Activated T-helper 1 cell treated with anti-CD3 and anti-CD28 coated beads, Interleukin-12 subunit alpha, Interleukin-12 subunit beta, Interleukin-2, Interleukin-4 antibody, amounts not matched to agents 30 ng/mL and 10 ng/mL and 1 ng/mL, durations not matched to agents 14 hours and 24 hours and 36 hours (primary cell): ENCODE measurements at regions of chr10 and their contacts with region 1.

Region 1: GRCh38 chr10:94362360-94363250 is at the start of gene NOC3L:
- DNase-seq: peak; percentile 92
- H3K4me3 Mint-ChIP-seq: peak within 1 kb of the TSS; percentile 88
- H3K27ac Mint-ChIP-seq: peak within 1 kb of the TSS; percentile 93
- H3K4me1 Mint-ChIP-seq: peaks cover 41% of the 10 kb centered on the region
- H3K27me3 Mint-ChIP-seq: peaks cover 10% of the 10 kb centered on the region
- total RNA-seq, gene NOC3L: 47.7 and 47.8 TPM in 2 replicates

Region 2: DNA sequence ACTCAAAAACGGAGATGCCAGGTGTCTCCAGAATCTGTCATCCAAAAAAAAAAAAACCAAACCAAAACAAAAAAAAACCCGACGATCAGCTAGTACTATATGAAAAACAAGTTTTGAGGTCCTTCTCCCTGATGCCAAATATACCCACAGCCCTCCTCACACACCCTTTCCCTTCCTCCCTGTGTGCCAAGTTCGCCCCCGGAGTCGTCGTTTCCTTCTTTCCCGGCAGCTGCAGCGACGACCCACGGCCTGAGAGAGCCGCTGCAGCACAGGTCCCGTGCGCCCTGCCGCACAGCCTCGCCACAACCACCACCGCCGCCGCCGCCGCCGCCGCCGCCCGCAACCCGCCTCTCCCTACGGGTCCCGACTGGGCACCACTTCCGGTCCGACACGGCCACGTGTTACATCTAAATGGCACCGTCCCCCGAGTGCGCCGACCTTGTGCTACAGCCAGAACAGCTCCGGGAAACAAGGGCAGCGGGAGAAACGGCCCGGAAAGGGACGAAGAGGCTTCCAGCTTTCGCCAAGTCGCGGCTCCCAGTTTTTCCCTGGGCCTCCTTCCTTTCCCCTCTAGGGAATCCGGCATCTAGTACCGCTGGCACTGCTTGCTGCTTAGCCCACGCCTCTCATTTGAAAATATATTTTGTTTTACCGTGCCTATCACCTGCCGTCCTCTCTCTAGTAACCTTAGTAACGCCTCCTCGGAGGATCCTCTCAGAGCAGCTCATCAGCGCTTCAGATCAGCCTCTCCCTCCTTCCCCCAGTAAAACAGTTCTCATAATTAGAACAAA is 660.2 kb before region 1 on chr10 and contains the start of gene FRA10AC1:
- intact Hi-C with region 1: loop called (anchors 2 kb)
- DNase-seq: peak; percentile 86
- H3K4me3 Mint-ChIP-seq: no peak within 1 kb of the TSS
- H3K27ac Mint-ChIP-seq: no peak within 1 kb of the TSS
- H3K4me1 Mint-ChIP-seq: peaks cover 19% of the 10 kb centered on the region
- H3K27me3 Mint-ChIP-seq: no peaks in the 10 kb centered on the region
- total RNA-seq, gene FRA10AC1: 25.9 and 28.2 TPM in 2 replicates

Region 3: DNA sequence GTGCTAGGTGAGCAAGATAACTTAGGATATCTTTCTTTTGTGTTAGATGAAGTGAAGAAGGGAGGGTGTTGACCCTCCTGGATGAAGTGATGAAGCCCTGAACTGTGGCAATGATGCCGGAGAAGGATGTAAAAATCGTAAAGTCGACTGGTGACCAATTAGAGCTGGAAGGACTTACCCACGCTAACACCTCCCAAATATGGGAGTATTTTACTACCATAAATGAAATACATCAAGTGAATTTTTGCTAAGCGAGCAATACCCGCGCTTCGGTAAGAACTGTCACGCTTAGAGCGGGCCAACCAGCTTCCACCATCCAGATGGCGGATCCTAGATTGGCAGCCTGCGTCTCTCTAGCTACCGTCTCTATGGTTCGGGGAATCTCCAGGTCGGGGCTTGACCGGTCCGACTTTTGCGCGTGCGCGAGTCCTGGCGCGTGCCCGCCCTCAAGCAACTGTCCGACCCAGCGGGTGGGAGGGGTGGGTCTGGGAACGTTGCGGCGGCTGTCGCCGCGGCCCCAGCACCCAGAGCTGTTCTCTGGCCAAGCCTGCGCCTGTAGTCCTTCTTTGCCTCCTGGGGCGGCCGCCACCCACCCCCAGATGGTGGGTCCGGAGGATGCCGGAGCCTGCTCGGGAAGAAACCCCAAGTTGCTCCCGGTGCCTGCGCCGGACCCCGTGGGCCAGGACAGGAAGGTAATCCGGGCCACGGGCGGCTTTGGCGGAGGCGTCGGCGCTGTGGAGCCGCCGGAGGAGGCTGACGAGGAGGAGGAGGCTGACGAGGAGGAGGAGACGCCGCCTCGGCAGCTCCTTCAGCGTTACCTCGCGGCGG is 39.6 kb after region 1 on chr10 and contains the start of gene TBC1D12:
- intact Hi-C with region 1: loop called (anchors 2 kb)
- DNase-seq: peak; percentile 16
- H3K4me3 Mint-ChIP-seq: peak within 1 kb of the TSS; percentile 62
- H3K27ac Mint-ChIP-seq: no peak within 1 kb of the TSS
- H3K4me1 Mint-ChIP-seq: peaks cover 4% of the 10 kb centered on the region
- H3K27me3 Mint-ChIP-seq: peaks cover 60% of the 10 kb centered on the region
- total RNA-seq, gene TBC1D12: 0.73 and 0.86 TPM in 2 replicates

Region 4: DNA sequence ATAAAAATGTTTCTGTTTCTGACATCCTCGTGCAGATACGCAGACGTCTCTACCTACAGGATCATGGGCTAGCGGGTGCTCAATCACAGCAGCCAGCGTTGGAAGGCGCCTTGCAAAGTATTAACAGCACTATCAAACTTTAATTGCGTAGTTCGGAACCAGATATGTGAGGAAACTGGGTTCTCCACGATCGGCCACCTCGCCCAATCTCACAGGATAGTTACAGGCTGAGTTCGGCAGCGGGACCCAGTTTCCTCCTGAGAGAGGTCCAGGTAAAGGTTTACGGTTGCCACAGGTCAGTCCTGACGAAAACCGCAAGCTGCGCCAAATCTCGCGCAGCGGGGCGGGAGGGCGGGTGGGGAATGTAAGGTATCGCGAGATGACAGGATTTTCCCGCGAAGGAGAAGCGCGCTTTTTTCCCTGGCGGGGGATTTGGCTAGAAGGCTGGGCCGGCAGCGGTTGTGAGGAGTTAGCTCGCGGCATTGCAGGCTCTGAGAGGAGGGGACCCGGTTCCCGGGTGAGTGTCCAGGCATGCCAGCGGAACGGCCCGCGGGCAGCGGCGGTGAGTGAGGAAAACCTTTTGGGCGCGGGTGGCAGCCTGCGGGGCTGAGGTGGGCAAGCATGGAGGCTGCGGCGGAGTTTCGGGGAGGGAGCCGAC is 182.9 kb after region 1 on chr10 and contains the start of gene HELLS:
- intact Hi-C with region 1: loop called (anchors 1 kb)
- DNase-seq: peak; percentile 69
- H3K4me3 Mint-ChIP-seq: peak within 1 kb of the TSS; percentile 99
- H3K27ac Mint-ChIP-seq: peak within 1 kb of the TSS; percentile 96
- H3K4me1 Mint-ChIP-seq: peaks cover 33% of the 10 kb centered on the region
- H3K27me3 Mint-ChIP-seq: peaks cover 13% of the 10 kb centered on the region
- total RNA-seq, gene HELLS: 224 and 228 TPM in 2 replicates

Region 5: DNA sequence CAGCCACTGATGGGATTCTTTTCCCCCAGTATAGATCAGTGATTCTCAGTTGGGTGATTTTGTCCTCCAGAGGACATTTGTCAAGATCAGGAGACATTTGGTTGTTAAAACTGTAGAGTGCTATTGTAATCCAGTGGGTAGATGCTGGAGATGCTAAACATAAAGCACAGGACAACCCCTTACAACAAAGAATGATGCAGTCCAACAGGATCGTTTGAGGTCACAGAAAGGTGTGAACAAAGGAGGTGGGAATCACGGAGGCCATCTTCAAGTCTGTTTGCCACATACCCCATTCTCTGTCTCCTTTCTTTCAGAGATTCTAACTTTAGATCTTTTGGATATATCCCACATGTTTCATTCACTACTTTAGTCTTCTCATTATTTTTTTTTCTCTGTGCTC is 252.0 kb after region 1 on chr10:
- intact Hi-C with region 1: loop called (anchors 5 kb)
- DNase-seq: no peak
- H3K4me3 Mint-ChIP-seq: no peak overlapping the region
- H3K27ac Mint-ChIP-seq: no peak overlapping the region
- H3K4me1 Mint-ChIP-seq: peaks cover 2% of the 10 kb centered on the region
- H3K27me3 Mint-ChIP-seq: no peaks in the 10 kb centered on the region

Region 6: GRCh38 chr10:96129387-96130325 is 1767.1 kb after region 1 on chr10 and contains the start of gene ZNF518A:
- intact Hi-C with region 1: loop called (anchors 5 kb)
- DNase-seq: peak; percentile 86
- H3K4me3 Mint-ChIP-seq: peak within 1 kb of the TSS; percentile 90
- H3K27ac Mint-ChIP-seq: peak within 1 kb of the TSS; percentile 99
- H3K4me1 Mint-ChIP-seq: peaks cover 33% of the 10 kb centered on the region
- H3K27me3 Mint-ChIP-seq: peaks cover 27% of the 10 kb centered on the region
- total RNA-seq, gene ZNF518A: 14.3 and 16.2 TPM in 2 replicates